RWPE1 (cell line): ENCODE measurements at regions of chr2 and their contacts with region 1.

Region 1: GRCh38 chr2:100381240-100381639 is 36.2 kb downstream of the CHST10 start:
- DNase-seq: peak; percentile 48
- H3K27ac ChIP-seq: no peak overlapping the region
- CTCF ChIP-seq: peak; percentile 80

Region 2: GRCh38 chr2:99725820-99726219 is 655.4 kb before region 1 on chr2:
- CTCF ChIA-PET with region 1: interaction called, 11 read pairs
- POLR2A ChIA-PET with region 1: no interaction called
- DNase-seq: no peak
- H3K27ac ChIP-seq: no peak overlapping the region
- CTCF ChIP-seq: no peak

Region 3: DNA sequence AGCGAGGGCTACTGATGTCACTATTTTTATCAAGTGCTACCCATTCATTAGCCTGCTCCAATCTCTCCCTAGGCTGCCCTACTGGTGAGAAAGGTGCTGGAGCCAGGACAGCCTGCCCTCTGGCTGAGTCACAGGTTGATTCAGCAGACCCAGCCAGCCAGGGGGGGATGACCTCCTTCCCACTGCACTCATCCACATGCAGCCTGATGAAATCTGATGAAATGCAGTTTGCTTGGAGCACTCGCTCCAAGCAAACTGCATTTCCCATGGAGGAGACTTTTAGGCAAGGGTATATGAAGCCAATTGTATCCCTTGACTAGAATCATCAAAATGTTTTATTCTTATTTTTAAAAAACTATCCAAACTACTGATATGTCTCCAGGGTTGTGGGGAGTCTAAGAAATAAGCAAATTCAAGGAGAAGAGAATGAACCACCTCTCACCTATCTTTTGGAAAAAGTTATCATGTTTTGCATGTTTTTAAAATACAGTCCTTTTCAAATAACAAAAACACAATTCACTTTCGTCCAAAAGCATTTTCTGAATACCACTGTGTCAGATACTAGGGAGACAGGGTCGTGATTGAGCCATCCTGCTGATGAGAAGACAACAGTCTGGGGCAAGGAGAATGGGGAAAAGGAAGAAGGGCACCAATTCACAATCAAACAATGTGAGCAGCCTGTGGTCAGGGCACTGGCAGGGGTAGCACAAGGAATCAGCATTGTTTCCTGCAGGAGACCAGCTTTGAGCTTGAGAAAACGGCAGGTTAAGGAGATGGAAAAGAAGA is 367.2 kb before region 1 on chr2:
- CTCF ChIA-PET with region 1: no interaction called
- POLR2A ChIA-PET with region 1: no interaction called
- DNase-seq: peak; percentile 74
- H3K27ac ChIP-seq: no peak overlapping the region
- CTCF ChIP-seq: no peak

Region 4: GRCh38 chr2:100057902-100058311 is 323.3 kb before region 1 on chr2:
- CTCF ChIA-PET with region 1: no interaction called
- POLR2A ChIA-PET with region 1: no interaction called
- DNase-seq: no peak
- H3K27ac ChIP-seq: no peak overlapping the region
- CTCF ChIP-seq: no peak

Region 5: DNA sequence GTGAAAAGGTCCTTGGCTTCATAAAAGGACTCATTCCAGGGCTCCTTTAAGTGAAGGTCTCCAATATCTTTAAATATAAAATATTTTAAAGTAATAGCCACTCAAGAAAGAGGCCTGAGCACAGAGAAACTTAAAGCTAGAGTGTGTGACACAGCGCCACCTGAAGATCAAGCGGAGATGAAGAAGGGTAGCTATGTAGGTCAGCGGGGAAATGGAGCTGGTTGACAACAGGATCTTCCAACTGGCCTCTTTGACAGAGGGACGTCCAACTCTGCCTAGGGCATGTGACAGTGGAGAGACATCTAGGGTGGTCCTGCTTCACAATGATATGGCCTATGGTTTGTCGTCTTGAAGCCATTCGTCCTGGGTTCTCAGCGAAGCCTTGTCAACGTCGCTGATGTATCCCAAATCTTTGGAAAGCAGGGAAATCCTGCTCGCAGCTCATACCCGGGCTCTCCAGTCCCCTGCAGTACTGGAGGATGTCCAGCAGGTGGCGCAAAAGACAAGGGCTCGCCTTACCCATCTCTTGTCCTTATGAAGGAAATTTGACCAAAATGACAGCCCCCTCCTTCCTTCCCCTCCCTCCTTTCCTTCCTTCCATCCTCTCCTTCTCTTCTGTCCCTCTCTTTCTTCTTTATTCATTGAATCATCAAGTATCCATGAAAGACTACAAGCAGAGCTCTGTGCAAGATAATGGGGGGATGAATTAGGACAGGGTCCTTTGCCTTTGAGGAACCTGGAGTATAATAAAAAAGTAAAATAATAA is 118.5 kb before region 1 on chr2:
- CTCF ChIA-PET with region 1: interaction called, 67 read pairs
- POLR2A ChIA-PET with region 1: no interaction called
- DNase-seq: peak; percentile 65
- H3K27ac ChIP-seq: no peak overlapping the region
- CTCF ChIP-seq: peak; percentile 94